GM10248 (cell line): ENCODE measurements at regions of chr6 and their contacts with region 1.

Region 1: DNA sequence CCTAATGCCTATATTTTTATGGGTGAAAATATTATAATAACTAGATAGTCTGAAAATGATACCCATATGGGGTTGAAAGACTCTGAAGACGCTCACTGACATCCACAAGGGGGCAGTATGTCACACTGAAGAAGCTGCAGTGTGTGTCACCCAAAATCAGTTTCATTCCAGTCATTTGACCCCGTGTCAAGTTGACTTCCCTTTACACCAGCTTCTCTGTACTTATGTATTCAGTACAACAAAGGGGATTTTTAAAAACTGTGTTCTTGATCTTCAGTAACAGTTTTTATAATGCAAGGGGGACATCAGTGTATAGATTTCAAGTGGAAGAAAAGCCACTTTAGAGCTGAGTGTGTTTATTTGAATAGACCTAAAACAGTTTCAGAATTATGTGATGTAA is 19.3 kb downstream of the FAXC start:
- DNase-seq: peak; percentile 78
- CTCF ChIP-seq: peak; percentile 80

Region 2: DNA sequence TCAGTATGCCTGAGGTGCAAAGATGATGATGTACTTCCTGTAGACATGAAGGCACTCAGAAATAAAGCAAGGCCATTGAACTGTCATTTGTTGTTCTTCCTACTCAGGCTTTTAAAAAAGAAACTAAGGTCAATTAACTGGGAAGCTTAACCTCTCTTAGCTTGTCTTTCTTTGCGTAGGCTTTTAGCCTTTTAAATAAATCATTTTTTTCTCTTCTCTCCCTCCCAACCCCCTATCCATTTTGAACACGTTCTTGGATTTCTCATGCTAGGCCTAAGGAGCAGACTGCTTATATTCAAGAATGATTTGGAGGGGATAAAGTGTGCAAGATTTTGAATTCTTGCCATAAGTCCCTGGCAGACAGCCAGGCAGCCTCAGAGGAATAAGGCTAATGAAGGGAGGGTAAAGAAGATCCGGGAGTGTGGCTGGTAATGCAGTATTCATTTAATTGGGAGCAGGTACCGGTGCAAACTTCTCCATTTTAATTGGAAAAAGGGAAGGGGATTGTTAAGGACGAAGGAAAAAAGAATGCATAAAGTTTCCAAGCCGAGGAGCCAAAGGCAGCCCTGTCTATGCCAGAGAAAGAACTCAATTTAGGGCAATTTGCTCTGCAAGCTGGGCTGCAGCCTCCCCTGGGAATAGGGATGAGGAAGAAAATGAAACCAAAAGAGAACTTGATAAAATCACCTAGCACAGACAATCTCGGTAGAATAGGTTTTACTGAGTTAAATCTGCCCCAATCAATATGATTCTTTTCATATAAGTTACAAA is 1703.3 kb before region 1 on chr6:
- CTCF ChIA-PET with region 1: no interaction called
- POLR2A ChIA-PET with region 1: no interaction called
- DNase-seq: no peak
- CTCF ChIP-seq: no peak

Region 3: GRCh38 chr6:99349171-99350141 is 19.3 kb after region 1 on chr6 and contains the start of gene FAXC:
- CTCF ChIA-PET with region 1: interaction called, 65 read pairs
- POLR2A ChIA-PET with region 1: no interaction called
- DNase-seq: peak; percentile 41
- CTCF ChIP-seq: peak; percentile 12

Region 4: DNA sequence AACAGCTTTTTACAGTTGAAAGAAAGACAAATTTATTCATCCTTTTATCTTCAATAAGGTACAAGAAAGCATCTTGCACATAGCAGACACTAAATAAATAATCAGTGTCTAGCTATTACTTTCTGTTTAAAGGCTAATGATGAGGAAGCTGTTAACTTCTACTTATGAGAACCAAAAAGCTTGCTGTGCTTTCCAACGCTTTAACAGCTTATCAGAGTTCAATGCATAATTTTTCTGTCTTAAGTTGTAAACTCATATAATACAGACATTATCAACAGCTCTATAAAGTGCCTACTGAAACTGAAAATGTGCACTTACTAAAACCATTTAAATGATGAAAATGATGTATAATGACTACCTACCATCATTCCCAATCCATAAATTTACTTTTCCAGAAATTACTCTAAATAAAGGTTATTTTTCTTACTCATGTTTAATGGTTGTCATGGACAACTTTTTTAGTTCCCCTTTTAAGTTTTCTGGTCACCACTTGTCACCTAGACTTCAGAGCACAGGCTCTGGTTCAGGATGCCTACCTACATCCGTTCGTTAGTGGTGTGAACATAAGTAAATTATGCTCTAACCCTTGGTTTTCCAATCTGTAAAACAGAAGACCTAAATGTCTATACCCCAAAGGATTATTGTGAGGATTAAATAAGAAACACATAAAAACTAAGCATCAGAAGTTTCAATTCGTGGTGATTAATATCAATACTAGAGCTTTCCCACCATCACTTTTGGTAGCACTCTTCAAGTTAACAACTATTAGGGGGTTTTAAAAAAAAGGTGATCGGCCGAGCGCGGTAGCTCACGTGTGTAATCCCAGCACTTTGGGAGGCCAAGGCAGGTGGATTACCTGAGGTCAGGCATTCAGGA is 87.0 kb after region 1 on chr6:
- CTCF ChIA-PET with region 1: interaction called, 11 read pairs
- POLR2A ChIA-PET with region 1: no interaction called
- DNase-seq: peak; percentile 28
- CTCF ChIP-seq: no peak

Region 5: GRCh38 chr6:99434702-99435530 is 104.8 kb after region 1 on chr6:
- CTCF ChIA-PET with region 1: interaction called, 15 read pairs
- POLR2A ChIA-PET with region 1: no interaction called
- DNase-seq: peak; percentile 33
- CTCF ChIP-seq: peak; percentile 61